Head of caudate nucleus (tissue), 42 donors: ENCODE measurements at regions of chr6 and their contacts with region 1.

Region 1: DNA sequence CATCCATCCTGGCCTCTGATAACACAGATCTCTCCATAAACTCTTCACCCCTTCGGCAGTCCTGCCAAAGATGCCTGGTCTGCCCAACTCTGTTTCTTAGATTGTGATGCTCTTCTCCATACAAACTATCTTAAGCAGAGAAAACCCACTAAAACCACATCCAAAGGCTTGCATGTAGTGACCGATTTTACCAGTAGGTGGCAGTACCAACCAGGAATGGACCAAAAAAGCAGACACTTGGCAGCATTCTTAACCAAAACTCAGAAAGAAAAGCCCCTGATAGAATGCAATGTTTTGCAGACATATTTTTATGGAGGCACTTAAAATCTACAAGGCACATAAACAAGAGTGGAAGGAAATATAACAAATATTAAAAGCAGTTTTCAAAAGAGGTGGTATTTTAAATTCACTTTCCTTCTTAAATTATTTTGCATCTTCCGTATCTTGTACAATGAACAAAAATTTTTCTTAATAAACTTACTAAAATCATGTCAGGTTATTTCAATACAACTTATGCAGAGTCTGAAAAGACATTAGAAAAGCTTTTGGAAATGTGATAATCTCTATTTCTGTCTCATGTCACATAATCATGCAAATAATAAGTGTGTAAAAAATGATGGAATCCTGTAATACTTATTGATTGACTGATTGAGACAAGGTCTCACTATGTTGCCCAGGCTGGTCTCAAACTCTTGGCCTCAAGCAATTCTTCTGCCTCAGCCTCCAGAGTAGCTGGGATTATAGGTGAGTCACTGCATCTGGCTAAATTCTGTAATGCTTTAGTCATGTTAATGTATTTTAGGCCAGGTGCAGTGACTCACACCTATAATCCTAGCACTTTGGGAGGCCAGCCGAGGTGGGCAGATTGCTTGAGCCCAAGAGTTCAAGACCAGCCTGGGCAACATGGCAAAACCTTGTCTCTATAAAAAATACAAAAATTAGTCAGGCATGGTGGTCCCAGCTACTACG is 29.4 kb downstream of the LRP11 start:
- DNase-seq: peak in 37 of 42 donors; percentile 14 to 91 (median 72)

Region 2: DNA sequence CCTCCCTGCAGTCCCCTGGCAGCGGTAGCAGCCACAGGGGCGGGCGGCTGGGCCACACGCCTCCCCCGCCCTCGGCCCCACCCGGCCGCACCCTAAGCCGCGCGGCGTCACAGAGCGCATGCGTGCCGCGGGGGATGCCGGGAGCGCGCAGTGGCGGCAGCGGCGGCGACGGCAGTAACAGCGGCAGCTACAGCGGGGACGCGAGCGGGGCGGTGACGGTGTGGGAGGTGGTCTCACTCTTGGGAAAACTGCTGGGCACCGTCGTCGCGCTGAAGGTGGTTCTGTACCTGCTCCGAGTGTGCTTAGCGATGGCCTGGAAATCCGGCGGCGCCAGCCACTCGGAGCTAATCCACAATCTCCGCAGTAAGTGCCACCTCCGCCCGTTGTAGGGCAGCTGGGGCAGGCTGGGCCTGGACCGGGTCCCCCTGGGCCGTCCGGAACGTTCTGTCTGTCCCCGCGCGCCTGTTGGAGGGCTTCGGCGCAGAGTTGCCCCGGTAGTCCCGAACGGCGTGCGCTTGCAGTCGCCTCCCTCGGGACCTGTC is 85.1 kb before region 1 on chr6 and contains the start of gene PCMT1:
- intact Hi-C with region 1: loop called (anchors 10 kb)
- DNase-seq: peak; percentile 68 to 95 (median 89)

Region 3: GRCh38 chr6:149863697-149864577 is 29.1 kb after region 1 on chr6 and contains the start of gene LRP11:
- intact Hi-C with region 1: loop called (anchors 5 kb)
- DNase-seq: peak; percentile 66 to 96 (median 89)

Region 4: DNA sequence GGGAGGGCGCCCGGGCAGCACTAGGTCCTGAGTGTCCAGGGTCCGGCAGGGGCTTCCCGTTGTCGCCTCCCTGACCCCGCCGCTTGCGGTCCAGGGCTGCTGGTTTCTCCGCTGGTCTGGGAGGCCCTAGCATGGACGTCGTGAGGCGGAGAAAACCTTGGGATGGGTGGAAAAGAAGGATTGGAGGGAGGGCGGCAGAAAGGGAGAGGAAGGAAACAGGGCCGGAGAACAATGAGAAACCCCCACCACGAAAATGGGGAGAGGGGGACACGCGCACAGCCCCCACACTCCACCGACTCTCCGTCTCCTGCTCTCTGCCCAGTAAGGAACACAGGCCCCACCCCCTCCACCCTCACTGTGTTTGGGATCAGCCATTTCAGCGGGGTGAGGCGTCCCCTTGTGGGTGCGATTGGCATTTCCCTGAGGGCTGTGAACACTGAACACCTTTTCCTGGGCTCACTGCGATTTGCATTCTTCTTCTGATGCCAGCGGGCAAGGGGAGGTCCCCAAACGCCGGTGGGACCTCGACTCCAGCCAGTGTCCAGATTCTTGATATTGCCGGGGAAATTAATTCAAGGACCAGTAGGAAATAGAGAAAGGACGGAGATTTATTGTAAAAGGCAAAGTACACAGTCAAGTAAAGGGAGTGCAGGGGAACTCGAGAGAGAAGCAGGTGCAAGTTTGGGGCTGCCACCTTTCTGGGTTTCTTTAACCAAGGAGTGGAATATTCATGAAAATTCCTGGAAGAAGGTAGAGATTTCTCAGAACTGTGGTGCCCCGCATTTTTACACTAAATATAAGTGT is 91.4 kb after region 1 on chr6:
- intact Hi-C with region 1: loop called (anchors 10 kb)
- DNase-seq: peak; percentile 63 to 90 (median 78)

Region 5: GRCh38 chr6:150016324-150017185 is 181.8 kb after region 1 on chr6:
- intact Hi-C with region 1: loop called (anchors 10 kb)
- DNase-seq: peak; percentile 32 to 91 (median 75)

Region 6: GRCh38 chr6:150119173-150119572 is 284.4 kb after region 1 on chr6:
- intact Hi-C with region 1: no loop called
- DNase-seq: peak in 1 of 42 donors; percentile 32